CD8-positive, alpha-beta T cell (primary cell): ENCODE measurements at regions of chr6 and their contacts with region 1.

Region 1: DNA sequence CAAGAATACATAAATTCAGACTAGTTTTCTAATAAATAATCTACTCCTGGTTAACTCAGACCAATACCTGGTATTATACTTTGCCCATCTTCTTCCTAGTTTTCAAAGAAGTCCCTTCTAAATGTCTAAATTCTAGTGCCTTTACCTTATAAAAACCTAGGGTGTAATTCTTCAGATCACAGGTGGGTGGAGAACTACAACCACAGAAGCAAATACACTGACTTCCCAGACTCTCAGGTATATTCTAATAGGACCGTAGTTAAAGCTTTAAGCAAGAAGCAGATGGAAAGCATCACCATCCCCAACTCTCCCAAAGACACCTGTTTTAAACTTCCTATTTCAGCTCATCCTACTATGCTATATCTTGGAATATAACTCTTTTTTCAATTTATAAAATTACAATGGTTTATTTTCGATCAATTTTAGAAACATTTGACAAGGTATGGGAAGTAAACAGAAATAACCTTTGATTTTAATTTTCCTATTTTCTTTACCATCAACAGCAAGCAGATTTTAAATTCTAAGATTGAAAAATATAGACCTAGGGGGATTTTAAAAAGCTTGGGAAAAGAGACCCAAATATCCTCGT is 15.8 kb downstream of the MAN1A1 start:
- DNase-seq: peak in 2 of 9 experiments; percentile 53 to 66
- ATAC-seq: peak; percentile 78
- H3K4me3 ChIP-seq: no peak overlapping the region
- H3K4me3 Mint-ChIP-seq: no peak overlapping the region
- H3K27ac ChIP-seq: no peak overlapping the region
- H3K27ac Mint-ChIP-seq: no peak overlapping the region
- H3K4me1 ChIP-seq: no peaks in the 10 kb centered on the region
- H3K4me1 Mint-ChIP-seq: peaks cover 20% of the 10 kb centered on the region
- H3K27me3 ChIP-seq: no peaks in the 10 kb centered on the region
- H3K27me3 Mint-ChIP-seq: no peaks in the 10 kb centered on the region
- CTCF ChIP-seq: peak; percentile 80

Region 2: GRCh38 chr6:119313937-119314884 is 19.6 kb before region 1 on chr6:
- CTCF ChIA-PET with region 1: interaction called, 12 read pairs
- POLR2A ChIA-PET with region 1: no interaction called
- intact Hi-C with region 1: no loop called
- DNase-seq: peak in 6 of 9 experiments; percentile 28 to 84 (median 60)
- ATAC-seq: peak; percentile 74
- H3K4me3 ChIP-seq: peak overlapping the region; percentile 2 to 7
- H3K4me3 Mint-ChIP-seq: peak overlapping the region; percentile 57
- H3K27ac ChIP-seq: peak overlapping the region; percentile 37 to 88
- H3K27ac Mint-ChIP-seq: peak overlapping the region; percentile 89
- H3K4me1 ChIP-seq: peaks cover 36% of the 10 kb centered on the region
- H3K4me1 Mint-ChIP-seq: peaks cover 60% of the 10 kb centered on the region
- H3K27me3 ChIP-seq: no peaks in the 10 kb centered on the region
- H3K27me3 Mint-ChIP-seq: no peaks in the 10 kb centered on the region
- CTCF ChIP-seq: no peak

Region 3: DNA sequence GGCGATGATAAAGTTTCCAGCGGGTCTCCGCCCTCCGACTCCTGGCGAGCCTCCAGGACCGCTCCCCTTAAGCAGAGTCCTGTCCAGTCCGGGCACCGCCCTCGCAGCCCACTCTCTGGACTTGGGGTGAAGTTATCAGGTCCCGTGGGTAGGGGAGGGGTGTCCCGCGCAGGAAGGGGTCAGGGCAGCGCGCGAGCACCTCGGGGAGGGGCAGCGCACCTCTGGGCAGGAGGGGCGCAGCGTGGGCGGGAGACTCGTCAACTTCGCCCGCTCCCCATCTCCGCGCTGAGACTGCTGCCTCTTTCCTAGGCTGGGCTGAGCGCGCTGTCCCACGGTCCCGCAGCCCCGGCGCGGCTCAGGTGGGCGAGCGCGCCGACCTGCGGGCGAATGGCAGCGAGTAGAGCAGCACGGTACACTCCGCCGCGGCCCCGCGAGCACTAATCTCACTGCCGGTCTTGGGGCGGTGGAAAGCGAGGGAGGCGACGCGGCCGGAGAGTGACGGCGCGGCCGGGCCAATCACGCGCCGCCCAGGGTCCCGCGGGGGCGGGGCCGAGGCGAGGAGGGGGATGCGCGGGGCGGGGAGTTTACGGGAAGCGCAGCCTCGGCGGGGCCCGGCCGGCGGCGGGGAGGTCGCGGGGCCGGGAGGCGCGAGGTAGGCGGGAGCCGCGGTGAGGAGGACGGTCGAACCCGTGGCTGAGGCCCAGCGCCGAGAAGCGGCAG is 15.7 kb after region 1 on chr6 and contains the start of gene MAN1A1:
- CTCF ChIA-PET with region 1: interaction called, 33 read pairs
- POLR2A ChIA-PET with region 1: interaction called, 8 read pairs
- intact Hi-C with region 1: loop called (anchors 2 kb)
- DNase-seq: peak; percentile 79 to 94 (median 88)
- ATAC-seq: peak; percentile 86
- H3K4me3 ChIP-seq: peak within 1 kb of the TSS; percentile 91 to 92
- H3K4me3 Mint-ChIP-seq: peak within 1 kb of the TSS; percentile 90
- H3K27ac ChIP-seq: peak within 1 kb of the TSS; percentile 65 to 67
- H3K27ac Mint-ChIP-seq: peak within 1 kb of the TSS; percentile 88
- H3K4me1 ChIP-seq: peaks cover 30% of the 10 kb centered on the region
- H3K4me1 Mint-ChIP-seq: peaks cover 45% of the 10 kb centered on the region
- H3K27me3 ChIP-seq: no peaks in the 10 kb centered on the region
- H3K27me3 Mint-ChIP-seq: no peaks in the 10 kb centered on the region
- CTCF ChIP-seq: no peak
- total RNA-seq, gene MAN1A1: 8.4 to 8.5 TPM

Region 4: DNA sequence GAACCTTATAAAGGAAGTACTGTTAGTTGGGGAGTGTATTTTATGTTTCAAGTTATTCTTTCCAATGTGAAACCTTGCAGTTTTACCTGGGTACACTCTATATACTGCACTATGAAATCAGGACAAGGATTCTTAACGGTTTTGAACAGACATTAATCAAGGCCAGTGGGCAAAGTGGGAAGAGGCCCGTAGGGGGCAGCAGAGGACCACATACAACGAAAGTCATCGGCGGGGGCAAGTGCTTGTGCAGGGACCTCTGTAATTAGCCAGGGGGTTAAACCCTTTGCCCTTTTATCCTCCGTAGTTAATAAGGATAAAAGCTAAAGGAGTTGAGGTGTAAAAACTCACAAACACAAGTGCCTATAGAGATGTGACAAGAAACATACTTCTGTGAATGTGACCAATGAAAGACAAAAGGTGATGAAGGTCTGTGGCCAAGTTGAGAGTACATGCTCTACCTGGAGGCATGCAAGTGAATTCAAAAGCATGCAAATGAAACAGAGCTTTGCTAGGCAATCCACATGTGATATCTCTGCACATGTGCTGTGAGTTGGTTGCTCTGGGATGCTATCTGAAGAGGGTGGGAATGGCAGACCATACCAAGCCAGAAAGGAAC is 408.5 kb after region 1 on chr6:
- CTCF ChIA-PET with region 1: interaction called, 4 read pairs
- POLR2A ChIA-PET with region 1: no interaction called
- intact Hi-C with region 1: loop called in 1 of 2 experiments (anchors 10 kb)
- DNase-seq: peak; percentile 9 to 60 (median 48)
- ATAC-seq: no peak
- H3K4me3 ChIP-seq: no peak overlapping the region
- H3K4me3 Mint-ChIP-seq: no peak overlapping the region
- H3K27ac ChIP-seq: no peak overlapping the region
- H3K27ac Mint-ChIP-seq: no peak overlapping the region
- H3K4me1 ChIP-seq: no peaks in the 10 kb centered on the region
- H3K4me1 Mint-ChIP-seq: peaks cover 2% of the 10 kb centered on the region
- H3K27me3 ChIP-seq: no peaks in the 10 kb centered on the region
- H3K27me3 Mint-ChIP-seq: peaks cover 2% of the 10 kb centered on the region
- CTCF ChIP-seq: peak; percentile 63

Region 5: GRCh38 chr6:119978274-119978889 is 644.6 kb after region 1 on chr6:
- CTCF ChIA-PET with region 1: interaction called, 4 read pairs
- POLR2A ChIA-PET with region 1: no interaction called
- intact Hi-C with region 1: loop called (anchors 5 kb)
- DNase-seq: peak in 2 of 9 experiments; percentile 13 to 18
- ATAC-seq: no peak
- H3K4me3 ChIP-seq: no peak overlapping the region
- H3K4me3 Mint-ChIP-seq: no peak overlapping the region
- H3K27ac ChIP-seq: no peak overlapping the region
- H3K27ac Mint-ChIP-seq: no peak overlapping the region
- H3K4me1 ChIP-seq: no peaks in the 10 kb centered on the region
- H3K4me1 Mint-ChIP-seq: no peaks in the 10 kb centered on the region
- H3K27me3 ChIP-seq: no peaks in the 10 kb centered on the region
- H3K27me3 Mint-ChIP-seq: no peaks in the 10 kb centered on the region
- CTCF ChIP-seq: no peak

Region 6: DNA sequence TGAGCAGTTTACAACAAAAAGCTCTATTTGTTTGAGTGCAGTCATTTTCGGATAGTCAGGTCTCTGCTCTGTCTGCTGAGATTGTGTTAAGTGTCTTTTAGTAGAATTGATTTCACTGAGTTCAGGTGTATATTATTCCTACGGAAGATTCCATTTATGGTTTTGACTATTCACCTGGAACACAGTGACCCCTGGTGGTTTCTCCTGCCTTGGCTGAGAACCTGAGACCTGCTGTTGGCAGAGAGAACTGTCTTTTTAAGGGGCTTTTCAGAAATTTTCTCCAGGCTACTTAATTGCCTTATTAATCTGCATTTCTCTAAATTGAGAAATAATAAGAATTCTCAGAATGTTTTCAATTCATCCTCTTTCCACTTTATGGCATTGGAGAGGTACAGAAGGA is 1492.5 kb after region 1 on chr6:
- CTCF ChIA-PET with region 1: no interaction called
- POLR2A ChIA-PET with region 1: no interaction called
- intact Hi-C with region 1: loop called in 1 of 2 experiments (anchors 5 kb)
- DNase-seq: peak in 1 of 9 experiments; percentile 6
- ATAC-seq: no peak
- H3K4me3 ChIP-seq: no peak overlapping the region
- H3K4me3 Mint-ChIP-seq: no peak overlapping the region
- H3K27ac ChIP-seq: no peak overlapping the region
- H3K27ac Mint-ChIP-seq: no peak overlapping the region
- H3K4me1 ChIP-seq: no peaks in the 10 kb centered on the region
- H3K4me1 Mint-ChIP-seq: no peaks in the 10 kb centered on the region
- H3K27me3 ChIP-seq: no peaks in the 10 kb centered on the region
- H3K27me3 Mint-ChIP-seq: no peaks in the 10 kb centered on the region
- CTCF ChIP-seq: no peak

Region 7: GRCh38 chr6:121305957-121306607 is 1972.3 kb after region 1 on chr6:
- CTCF ChIA-PET with region 1: interaction called, 3 read pairs
- POLR2A ChIA-PET with region 1: no interaction called
- intact Hi-C with region 1: loop called in 1 of 2 experiments (anchors 10 kb)
- DNase-seq: peak in 2 of 9 experiments; percentile 28 to 38
- ATAC-seq: no peak
- H3K4me3 ChIP-seq: no peak overlapping the region
- H3K4me3 Mint-ChIP-seq: no peak overlapping the region
- H3K27ac ChIP-seq: no peak overlapping the region
- H3K27ac Mint-ChIP-seq: no peak overlapping the region
- H3K4me1 ChIP-seq: no peaks in the 10 kb centered on the region
- H3K4me1 Mint-ChIP-seq: no peaks in the 10 kb centered on the region
- H3K27me3 ChIP-seq: no peaks in the 10 kb centered on the region
- H3K27me3 Mint-ChIP-seq: no peaks in the 10 kb centered on the region
- CTCF ChIP-seq: peak; percentile 59